Vagina (tissue), 2 donors: ENCODE measurements at regions of chr11 and their contacts with region 1.

Region 1: GRCh38 chr11:76799066-76799804 is 16.1 kb downstream of the TSKU start:
- DNase-seq: peak; percentile 92 to 96
- H3K4me3 ChIP-seq: peak overlapping the region; percentile 27 to 38
- H3K27ac ChIP-seq: peak overlapping the region; percentile 84
- H3K4me1 ChIP-seq: peaks cover 99% of the 10 kb centered on the region
- H3K27me3 ChIP-seq: no peaks in the 10 kb centered on the region
- CTCF ChIP-seq: peak; percentile 86 to 98 (median 86)
- POLR2A ChIP-seq: peak in 1 of 2 donors; percentile 1

Region 2: GRCh38 chr11:76588455-76589325 is 210.5 kb before region 1 on chr11:
- intact Hi-C with region 1: no loop called
- DNase-seq: peak in 1 of 2 donors; percentile 79
- H3K4me3 ChIP-seq: no peak overlapping the region
- H3K27ac ChIP-seq: peak overlapping the region; percentile 46
- H3K4me1 ChIP-seq: no peaks in the 10 kb centered on the region
- H3K27me3 ChIP-seq: no peaks in the 10 kb centered on the region
- CTCF ChIP-seq: no peak
- POLR2A ChIP-seq: no peak

Region 3: GRCh38 chr11:76734456-76735420 is 64.5 kb before region 1 on chr11:
- intact Hi-C with region 1: loop called (anchors 5 kb)
- DNase-seq: no peak
- H3K4me3 ChIP-seq: peak overlapping the region in 1 of 2 donors; percentile 33
- H3K27ac ChIP-seq: peak overlapping the region; percentile 61
- H3K4me1 ChIP-seq: peaks cover 18% of the 10 kb centered on the region
- H3K27me3 ChIP-seq: no peaks in the 10 kb centered on the region
- CTCF ChIP-seq: no peak
- POLR2A ChIP-seq: no peak

Region 4: DNA sequence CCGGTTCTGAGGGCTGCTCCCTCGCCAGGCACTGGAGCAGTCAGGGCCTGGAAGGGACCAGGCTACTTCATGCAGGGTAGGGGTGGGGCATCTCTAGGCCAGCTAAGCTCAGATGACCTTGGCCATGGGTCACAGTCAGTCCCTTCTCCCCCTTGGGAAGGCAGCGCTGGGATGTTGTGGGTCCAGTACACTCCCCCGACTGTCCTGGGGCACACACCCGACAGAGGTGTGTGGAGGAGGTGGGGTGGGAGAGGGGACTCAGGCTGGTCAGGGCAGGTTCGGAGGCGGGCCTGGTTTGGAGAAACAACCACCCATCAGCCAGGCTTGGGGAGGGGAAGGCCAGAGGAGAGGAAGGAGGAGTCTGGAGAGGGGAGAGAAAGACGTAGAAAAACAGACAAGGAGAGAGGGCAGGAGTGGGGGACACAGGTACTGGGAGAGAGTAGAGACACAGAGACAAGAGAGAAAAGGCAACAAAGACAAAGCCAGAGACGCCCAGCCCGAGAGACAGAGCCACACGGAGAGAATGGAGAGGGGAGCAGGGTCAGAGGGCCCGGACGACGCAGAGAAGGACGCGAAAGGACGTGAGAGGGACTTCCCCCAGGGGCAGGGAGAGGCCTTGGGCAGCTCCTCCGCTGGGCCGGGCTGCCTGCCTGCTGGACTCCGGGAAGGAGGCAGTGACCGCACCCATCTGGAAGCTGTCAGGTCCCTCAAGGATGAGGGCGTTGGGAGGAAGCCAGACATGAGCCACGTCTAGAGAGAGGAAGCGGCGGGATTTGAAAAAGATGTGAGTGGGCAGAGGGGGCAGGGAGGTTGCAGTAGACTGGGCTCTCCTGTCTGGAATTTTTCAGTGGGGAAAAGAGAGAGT is 46.7 kb before region 1 on chr11:
- intact Hi-C with region 1: no loop called
- DNase-seq: no peak
- H3K4me3 ChIP-seq: no peak overlapping the region
- H3K27ac ChIP-seq: peak overlapping the region; percentile 89
- H3K4me1 ChIP-seq: peaks cover 11% of the 10 kb centered on the region
- H3K27me3 ChIP-seq: no peaks in the 10 kb centered on the region
- CTCF ChIP-seq: no peak
- POLR2A ChIP-seq: no peak

Region 5: GRCh38 chr11:78622666-78623065 is 1823.4 kb after region 1 on chr11:
- intact Hi-C with region 1: no loop called
- DNase-seq: no peak
- H3K4me3 ChIP-seq: no peak overlapping the region
- H3K27ac ChIP-seq: no peak overlapping the region
- H3K4me1 ChIP-seq: no peaks in the 10 kb centered on the region
- H3K27me3 ChIP-seq: no peaks in the 10 kb centered on the region
- CTCF ChIP-seq: no peak
- POLR2A ChIP-seq: no peak